Heart right ventricle (tissue), 16 donors: ENCODE measurements at regions of chr2 and their contacts with region 1.

Region 1: GRCh38 chr2:218186355-218186766 is 19.6 kb upstream of the CXCR1 start:
- DNase-seq: peak; percentile 30 to 69
- ATAC-seq: peak; percentile 74 to 94 (median 90)
- H3K4me3 ChIP-seq: no peak overlapping the region
- H3K27ac ChIP-seq: no peak overlapping the region
- H3K4me1 ChIP-seq: peaks cover 0 to 10% (median 8%) of the 10 kb centered on the region in 9 donors
- H3K27me3 ChIP-seq: no peaks in the 10 kb centered on the region
- CTCF ChIP-seq: peak; percentile 56 to 90 (median 83)

Region 2: DNA sequence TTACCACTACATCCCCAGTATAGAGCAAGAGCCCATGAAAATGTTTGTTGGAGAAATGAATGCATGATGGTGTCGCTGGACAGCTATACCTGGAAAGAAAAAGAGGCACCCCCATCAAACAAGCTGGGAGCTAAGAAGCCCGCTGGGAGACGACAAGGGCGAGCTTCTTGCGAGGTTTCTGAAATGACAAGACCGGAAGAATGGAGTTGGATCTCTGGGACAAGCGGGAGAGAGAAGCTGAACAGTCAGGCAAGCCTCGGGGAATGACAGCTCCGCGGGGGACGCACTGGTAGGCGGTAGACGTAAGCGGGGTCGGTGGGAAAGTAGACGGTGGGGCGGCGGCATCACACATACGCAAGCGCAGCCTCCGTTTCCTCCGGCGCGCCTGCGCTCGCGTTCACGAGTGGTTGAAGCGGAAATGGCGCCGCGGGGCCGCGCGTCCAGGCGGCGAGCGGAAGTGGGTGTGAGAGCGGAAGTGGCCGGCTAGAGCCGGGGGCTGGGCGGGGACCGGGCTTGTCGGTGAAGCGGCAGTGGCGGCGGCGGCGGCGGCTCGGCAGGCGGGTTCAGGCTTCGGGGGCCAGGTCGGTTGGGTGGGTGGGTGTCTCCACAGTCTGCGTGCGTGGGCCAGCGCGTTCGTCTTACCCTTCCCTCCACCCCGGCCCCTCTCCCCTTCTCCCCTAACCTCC is 30.5 kb after region 1 on chr2 and contains the start of gene ARPC2:
- intact Hi-C with region 1: loop called in 2 of 10 experiments (anchors 1 to 2 kb)
- DNase-seq: peak; percentile 95 to 96
- ATAC-seq: peak; percentile 97 to 99 (median 98)
- H3K4me3 ChIP-seq: peak within 1 kb of the TSS; percentile 78 to 97 (median 94)
- H3K27ac ChIP-seq: peak within 1 kb of the TSS; percentile 58 to 99 (median 94)
- H3K4me1 ChIP-seq: peaks cover 11 to 53% (median 44%) of the 10 kb centered on the region in 9 donors
- H3K27me3 ChIP-seq: no peaks in the 10 kb centered on the region
- CTCF ChIP-seq: peak in 2 of 9 donors; percentile 5 to 20
- total RNA-seq, gene ARPC2: 120 to 213 (median 134) TPM

Region 3: GRCh38 chr2:218257390-218257981 is 71.1 kb after region 1 on chr2:
- intact Hi-C with region 1: loop called in 4 of 10 experiments (anchors 5 kb)
- DNase-seq: no peak
- ATAC-seq: peak in 4 of 8 donors; percentile 9 to 20 (median 13)
- H3K4me3 ChIP-seq: no peak overlapping the region
- H3K27ac ChIP-seq: peak overlapping the region in 6 of 10 donors; percentile 11 to 95 (median 37)
- H3K4me1 ChIP-seq: peaks cover 30 to 72% (median 54%) of the 10 kb centered on the region in 9 donors
- H3K27me3 ChIP-seq: no peaks in the 10 kb centered on the region
- CTCF ChIP-seq: peak in 8 of 9 donors; percentile 29 to 64 (median 48)

Region 4: GRCh38 chr2:218360447-218360846 is 174.1 kb after region 1 on chr2:
- intact Hi-C with region 1: loop called in 4 of 10 experiments (anchors 5 to 10 kb)
- DNase-seq: no peak
- ATAC-seq: peak in 6 of 8 donors; percentile 27 to 66 (median 43)
- H3K4me3 ChIP-seq: no peak overlapping the region
- H3K27ac ChIP-seq: peak overlapping the region in 1 of 10 donors; percentile 86
- H3K4me1 ChIP-seq: peaks cover 0 to 51% (median 0%) of the 10 kb centered on the region in 9 donors
- H3K27me3 ChIP-seq: no peaks in the 10 kb centered on the region
- CTCF ChIP-seq: no peak

Region 5: GRCh38 chr2:218466016-218466521 is 279.7 kb after region 1 on chr2:
- intact Hi-C with region 1: loop called in 1 of 10 experiments (anchors 10 kb)
- DNase-seq: no peak
- ATAC-seq: peak in 3 of 8 donors; percentile 37 to 53 (median 44)
- H3K4me3 ChIP-seq: no peak overlapping the region
- H3K27ac ChIP-seq: no peak overlapping the region
- H3K4me1 ChIP-seq: peaks cover 0 to 8% (median 0%) of the 10 kb centered on the region in 9 donors
- H3K27me3 ChIP-seq: no peaks in the 10 kb centered on the region
- CTCF ChIP-seq: peak in 8 of 9 donors; percentile 30 to 68 (median 60)